Aorta (tissue), 5 donors: ENCODE measurements at regions of chr2 and their contacts with region 1.

Region 1: GRCh38 chr2:20962939-20963557 is 80.8 kb downstream of the APOB start:
- DNase-seq: peak; percentile 76 to 88
- ATAC-seq: peak; percentile 77
- H3K4me3 ChIP-seq: no peak overlapping the region
- H3K27ac ChIP-seq: no peak overlapping the region
- H3K4me1 ChIP-seq: peaks cover 0 to 3% of the 10 kb centered on the region in 2 donors
- H3K27me3 ChIP-seq: no peaks in the 10 kb centered on the region

Region 2: DNA sequence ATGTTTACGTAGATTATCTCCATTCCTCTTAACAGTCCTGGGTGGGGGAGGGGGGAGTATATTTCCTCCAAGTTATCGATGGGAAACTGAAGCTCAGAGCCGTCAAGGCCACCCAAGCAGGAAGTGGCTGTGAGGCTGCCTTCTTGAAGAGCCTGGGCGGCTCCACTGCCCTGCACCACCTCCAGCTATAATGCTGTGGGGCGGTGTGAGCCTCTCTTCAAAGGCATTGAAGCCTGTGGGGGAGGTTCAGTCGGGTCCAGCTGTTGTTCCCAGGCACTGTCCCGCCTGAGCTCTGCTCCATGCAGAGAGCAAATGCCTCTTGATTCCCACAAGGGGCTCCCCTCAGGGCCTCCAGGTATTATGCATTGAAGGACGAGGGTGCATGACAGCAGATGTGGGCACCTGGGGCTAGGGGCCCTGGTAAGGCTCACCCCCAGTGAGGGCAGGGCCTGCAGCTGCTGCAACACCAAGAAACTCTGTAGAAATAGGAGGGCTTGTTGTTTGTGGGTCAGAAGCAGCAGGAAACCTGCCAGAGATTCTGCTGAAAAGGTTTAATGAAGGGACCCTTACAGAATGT is 882.1 kb before region 1 on chr2:
- intact Hi-C with region 1: no loop called
- DNase-seq: no peak
- ATAC-seq: no peak
- H3K4me3 ChIP-seq: no peak overlapping the region
- H3K27ac ChIP-seq: no peak overlapping the region
- H3K4me1 ChIP-seq: no peaks in the 10 kb centered on the region
- H3K27me3 ChIP-seq: no peaks in the 10 kb centered on the region

Region 3: GRCh38 chr2:20365249-20365817 is 597.7 kb before region 1 on chr2:
- intact Hi-C with region 1: no loop called
- DNase-seq: no peak
- ATAC-seq: no peak
- H3K4me3 ChIP-seq: no peak overlapping the region
- H3K27ac ChIP-seq: no peak overlapping the region
- H3K4me1 ChIP-seq: no peaks in the 10 kb centered on the region
- H3K27me3 ChIP-seq: no peaks in the 10 kb centered on the region

Region 4: DNA sequence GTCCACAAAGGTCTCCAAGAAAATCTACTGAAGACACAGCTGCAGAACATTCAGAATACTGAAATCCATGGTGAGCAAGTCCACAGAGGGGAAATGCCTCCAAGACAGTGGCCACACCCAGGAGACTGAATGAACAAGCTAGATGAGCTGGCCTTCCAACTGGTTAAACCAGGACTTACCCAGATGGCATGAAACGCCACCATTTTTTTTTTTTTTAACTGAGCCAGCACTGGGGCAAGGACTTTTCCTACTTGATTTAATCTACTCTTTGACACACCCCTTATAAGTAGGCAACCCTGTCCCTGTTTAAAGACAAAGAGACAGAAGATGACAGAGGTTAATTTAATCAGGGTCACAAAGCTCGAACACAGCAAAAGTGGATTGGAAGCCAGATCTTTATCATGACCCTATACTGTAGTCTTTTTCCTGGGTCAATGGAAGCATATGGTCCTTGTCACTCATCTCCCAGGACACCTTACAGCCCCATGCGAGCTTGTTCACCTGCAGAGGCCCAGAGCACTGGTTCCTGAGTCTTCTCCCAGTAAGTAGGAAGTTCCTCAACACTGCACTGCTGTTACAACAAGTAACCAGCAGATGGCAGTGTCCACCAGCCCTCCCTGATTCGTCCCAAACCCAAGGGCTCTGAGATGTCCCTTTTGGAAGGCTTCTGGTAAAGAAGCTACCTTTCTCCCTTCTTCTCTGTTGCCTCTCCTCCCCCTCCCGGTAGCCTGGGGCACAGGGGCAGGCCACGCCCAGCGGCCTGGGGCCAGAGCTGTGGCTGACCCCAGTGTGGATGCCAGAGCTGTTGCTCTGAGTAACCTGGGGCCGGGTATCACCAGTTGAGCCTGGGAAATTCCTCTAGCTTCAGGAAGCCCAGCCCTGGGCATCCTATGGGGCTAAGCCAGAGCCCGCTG is 301.7 kb before region 1 on chr2:
- intact Hi-C with region 1: loop called (anchors 2 to 5 kb)
- DNase-seq: peak in 1 of 2 donors; percentile 67
- ATAC-seq: peak; percentile 87
- H3K4me3 ChIP-seq: no peak overlapping the region
- H3K27ac ChIP-seq: no peak overlapping the region
- H3K4me1 ChIP-seq: no peaks in the 10 kb centered on the region
- H3K27me3 ChIP-seq: no peaks in the 10 kb centered on the region

Region 5: DNA sequence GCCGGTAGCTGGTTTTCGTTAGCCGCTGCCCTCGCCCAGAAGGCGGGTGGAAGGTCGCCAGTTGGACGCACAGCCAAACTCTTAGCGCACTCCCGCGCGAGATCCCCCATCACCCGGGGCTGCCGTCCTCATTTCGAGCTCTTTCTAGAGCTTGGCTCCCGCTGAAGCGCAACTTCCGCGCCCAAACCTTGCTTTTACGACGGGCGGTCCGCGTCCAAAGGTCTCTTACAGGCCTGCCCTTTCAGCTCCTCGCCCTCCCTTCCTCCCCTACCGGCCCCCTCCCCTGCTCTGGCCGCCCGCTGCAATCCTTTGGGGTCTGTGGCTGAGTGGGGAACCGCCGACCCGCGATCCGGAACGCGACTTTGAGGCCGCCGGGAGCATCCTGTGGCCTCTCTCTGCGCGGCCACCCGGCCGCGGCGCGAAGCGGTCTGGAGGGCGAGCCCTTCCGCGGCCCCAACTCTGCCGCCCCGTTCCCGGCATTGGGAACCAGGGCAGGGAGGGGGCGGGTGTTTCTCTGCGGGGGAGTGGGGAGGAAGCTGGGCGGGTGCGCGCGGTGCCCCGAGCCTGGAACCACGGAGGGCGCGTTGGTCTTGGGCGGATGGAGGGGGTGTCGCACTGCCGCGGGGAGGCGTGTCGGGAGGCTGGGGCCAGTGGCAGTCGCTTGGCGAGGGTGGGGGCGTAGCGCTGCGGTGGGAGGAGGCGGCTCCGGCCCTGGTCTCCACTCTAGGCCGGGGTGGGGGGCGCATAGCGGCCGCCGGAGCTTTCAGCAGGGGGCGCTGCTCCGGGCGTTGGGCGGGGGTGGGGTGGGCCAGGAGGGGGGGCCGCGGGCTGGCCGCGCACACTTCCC is 296.5 kb before region 1 on chr2 and contains the start of gene GDF7:
- intact Hi-C with region 1: loop called (anchors 2 to 5 kb)
- DNase-seq: peak; percentile 93 to 96
- ATAC-seq: peak; percentile 89
- H3K4me3 ChIP-seq: peak within 1 kb of the TSS; percentile 33 to 74
- H3K27ac ChIP-seq: peak within 1 kb of the TSS; percentile 91 to 96
- H3K4me1 ChIP-seq: no peaks in the 10 kb centered on the region
- H3K27me3 ChIP-seq: no peaks in the 10 kb centered on the region
- total RNA-seq, gene GDF7: 15.9 to 16.4 TPM

Region 6: GRCh38 chr2:20682167-20682920 is 280.7 kb before region 1 on chr2:
- intact Hi-C with region 1: loop called (anchors 5 kb)
- DNase-seq: no peak
- ATAC-seq: no peak
- H3K4me3 ChIP-seq: no peak overlapping the region
- H3K27ac ChIP-seq: peak overlapping the region in 1 of 2 donors; percentile 34
- H3K4me1 ChIP-seq: no peaks in the 10 kb centered on the region
- H3K27me3 ChIP-seq: no peaks in the 10 kb centered on the region

Region 7: GRCh38 chr2:20781656-20782265 is 181.3 kb before region 1 on chr2:
- intact Hi-C with region 1: loop called (anchors 2 kb)
- DNase-seq: no peak
- ATAC-seq: no peak
- H3K4me3 ChIP-seq: no peak overlapping the region
- H3K27ac ChIP-seq: no peak overlapping the region
- H3K4me1 ChIP-seq: no peaks in the 10 kb centered on the region
- H3K27me3 ChIP-seq: no peaks in the 10 kb centered on the region

Region 8: GRCh38 chr2:20822535-20823490 is 140.2 kb before region 1 on chr2 and contains the start of gene LDAH:
- intact Hi-C with region 1: loop called in 1 of 2 experiments (anchors 10 kb)
- DNase-seq: peak; percentile 93 to 98
- ATAC-seq: peak; percentile 97
- H3K4me3 ChIP-seq: peak within 1 kb of the TSS; percentile 50 to 65
- H3K27ac ChIP-seq: peak within 1 kb of the TSS; percentile 10 to 82
- H3K4me1 ChIP-seq: peaks cover 0 to 2% of the 10 kb centered on the region in 2 donors
- H3K27me3 ChIP-seq: no peaks in the 10 kb centered on the region
- total RNA-seq, gene LDAH: 13.0 to 18.3 TPM